Motor neuron (in vitro differentiated cells): ENCODE measurements at regions of chr10 and their contacts with region 1.

Region 1: GRCh38 chr10:88541116-88541626 is 41.9 kb downstream of the RNLS start:
- ATAC-seq: no peak
- H3K4me3 ChIP-seq: no peak overlapping the region
- H3K27ac ChIP-seq: no peak overlapping the region
- H3K4me1 ChIP-seq: no peaks in the 10 kb centered on the region

Region 2: GRCh38 chr10:88401671-88402347 is 139.4 kb before region 1 on chr10:
- in situ Hi-C with region 1: loop called in 1 of 9 experiments (anchors 10 kb)
- ATAC-seq: peak in 3 of 8 experiments; percentile 13 to 94 (median 93)
- H3K4me3 ChIP-seq: no peak overlapping the region
- H3K27ac ChIP-seq: no peak overlapping the region
- H3K4me1 ChIP-seq: no peaks in the 10 kb centered on the region

Region 3: GRCh38 chr10:88820748-88821389 is 279.7 kb after region 1 on chr10:
- in situ Hi-C with region 1: no loop called
- ATAC-seq: peak in 7 of 8 experiments; percentile 30 to 99 (median 71)
- H3K4me3 ChIP-seq: no peak overlapping the region
- H3K27ac ChIP-seq: no peak overlapping the region
- H3K4me1 ChIP-seq: peaks cover 0 to 10% of the 10 kb centered on the region in 2 donors